ENCODE measurements at regions of chr3 and their contacts with region 1.

Region 1: DNA sequence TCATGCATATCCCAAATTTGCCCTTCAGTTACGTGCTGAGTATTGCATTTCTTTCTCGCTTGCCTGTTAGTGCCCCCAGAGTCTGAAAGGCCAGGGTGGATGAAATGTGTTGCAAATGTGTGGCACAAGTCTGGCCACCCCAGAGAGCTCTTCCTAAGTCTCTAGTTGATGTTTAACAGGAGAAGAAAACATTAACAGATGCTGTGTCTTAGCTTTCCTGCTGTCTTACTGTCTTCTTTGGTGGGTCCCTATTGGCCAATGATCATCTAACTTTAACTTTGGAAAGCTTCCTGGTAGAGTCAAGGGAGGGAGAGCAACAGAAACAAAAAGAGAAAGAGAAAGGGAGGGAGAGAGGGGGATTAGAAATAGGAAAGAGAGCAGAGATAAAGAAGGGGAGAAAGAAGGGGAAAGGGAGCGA is 76.7 kb upstream of the P3H2 start:
- DNase-seq: no peak
- ATAC-seq: no peak
- H3K4me3 ChIP-seq: no peak overlapping the region
- H3K27ac ChIP-seq: no peak overlapping the region
- H3K4me1 ChIP-seq: peaks cover 0 to 10% (median 0%) of the 10 kb centered on the region in 9 donors
- H3K27me3 ChIP-seq: no peaks in the 10 kb centered on the region
- CTCF ChIP-seq: no peak

Region 2: DNA sequence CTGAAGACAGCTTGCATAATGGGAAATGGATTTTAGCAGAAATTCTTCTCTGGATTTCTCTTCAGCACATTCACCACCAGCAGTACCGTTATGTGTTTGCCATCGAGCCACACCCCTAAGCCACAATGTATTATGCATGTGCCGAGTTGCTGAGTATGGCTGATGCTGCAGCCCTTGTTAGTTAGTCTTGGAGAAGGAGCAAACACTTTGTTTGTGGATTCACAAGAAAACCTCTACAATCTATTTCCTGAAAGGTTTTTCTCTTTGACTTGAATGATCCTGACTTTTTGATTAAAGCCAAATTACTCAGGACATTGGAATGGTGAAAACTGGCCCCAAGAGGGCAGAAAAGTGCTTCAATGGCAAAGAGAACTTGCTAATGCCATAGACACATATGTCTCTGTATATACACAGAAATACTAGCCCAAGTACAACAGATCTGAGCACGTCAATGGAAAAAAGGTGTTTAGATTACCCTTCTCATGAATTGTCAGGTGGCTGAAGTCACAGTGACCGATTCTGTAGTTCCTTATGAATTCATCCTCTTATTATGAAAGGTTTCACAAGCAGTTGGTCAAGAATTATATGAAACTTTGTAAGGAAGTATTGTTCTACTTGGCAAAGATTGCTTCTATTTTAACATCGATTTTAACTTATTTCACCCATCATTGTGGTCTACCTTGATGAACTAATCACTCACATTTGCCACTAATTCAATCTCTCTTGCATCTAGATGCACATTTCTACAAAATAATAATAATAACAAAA is 179.7 kb before region 1 on chr3:
- intact Hi-C with region 1: loop called in 2 of 10 experiments (anchors 5 to 10 kb)
- DNase-seq: peak in 1 of 2 donors; percentile 12
- ATAC-seq: peak in 2 of 8 donors; percentile 56 to 68
- H3K4me3 ChIP-seq: no peak overlapping the region
- H3K27ac ChIP-seq: no peak overlapping the region
- H3K4me1 ChIP-seq: peaks cover 0 to 27% (median 0%) of the 10 kb centered on the region in 9 donors
- H3K27me3 ChIP-seq: no peaks in the 10 kb centered on the region
- CTCF ChIP-seq: peak in 8 of 9 donors; percentile 15 to 56 (median 35)